ENCODE measurements at regions of chr5 and their contacts with region 1.

Region 1: DNA sequence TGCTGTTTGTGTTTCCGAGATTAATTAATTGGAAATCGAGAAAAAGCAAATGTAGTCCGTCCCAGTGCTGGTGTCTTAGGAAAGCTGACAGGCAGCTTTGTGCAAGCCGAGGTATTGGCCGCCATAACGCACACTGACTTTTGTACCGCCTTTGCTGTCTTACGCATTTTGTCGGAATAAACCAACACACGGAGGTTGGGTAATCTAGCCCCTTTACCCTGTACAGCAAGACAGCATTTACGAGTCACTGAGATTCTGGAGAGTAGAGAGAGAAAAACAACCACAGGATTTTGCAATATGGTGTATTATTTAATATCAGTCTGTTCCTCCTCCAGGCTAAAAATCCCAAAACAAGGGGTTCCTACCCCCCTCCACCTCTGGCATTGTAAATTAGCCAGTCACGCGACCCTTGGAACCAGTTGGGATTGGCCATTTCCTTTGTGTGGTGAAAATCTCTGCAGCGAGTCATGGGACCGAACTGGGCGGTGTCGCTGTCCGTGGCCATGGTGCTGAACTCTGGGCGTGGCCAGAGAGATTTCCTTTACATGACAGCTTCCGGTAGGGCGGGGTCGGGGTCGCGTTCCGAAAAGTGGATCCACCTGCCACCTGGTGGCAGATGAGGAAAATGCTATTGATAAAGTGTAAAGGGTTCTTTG is 10.3 kb upstream of the PCDHB1 start:
- DNase-seq: peak; percentile 99
- ATAC-seq: peak; percentile 88
- H3K4me3 Mint-ChIP-seq: no peak overlapping the region
- H3K27ac Mint-ChIP-seq: no peak overlapping the region
- H3K4me1 Mint-ChIP-seq: peaks cover 4% of the 10 kb centered on the region
- H3K27me3 Mint-ChIP-seq: peaks cover 8% of the 10 kb centered on the region
- CTCF ChIP-seq: peak; percentile 81

Region 2: DNA sequence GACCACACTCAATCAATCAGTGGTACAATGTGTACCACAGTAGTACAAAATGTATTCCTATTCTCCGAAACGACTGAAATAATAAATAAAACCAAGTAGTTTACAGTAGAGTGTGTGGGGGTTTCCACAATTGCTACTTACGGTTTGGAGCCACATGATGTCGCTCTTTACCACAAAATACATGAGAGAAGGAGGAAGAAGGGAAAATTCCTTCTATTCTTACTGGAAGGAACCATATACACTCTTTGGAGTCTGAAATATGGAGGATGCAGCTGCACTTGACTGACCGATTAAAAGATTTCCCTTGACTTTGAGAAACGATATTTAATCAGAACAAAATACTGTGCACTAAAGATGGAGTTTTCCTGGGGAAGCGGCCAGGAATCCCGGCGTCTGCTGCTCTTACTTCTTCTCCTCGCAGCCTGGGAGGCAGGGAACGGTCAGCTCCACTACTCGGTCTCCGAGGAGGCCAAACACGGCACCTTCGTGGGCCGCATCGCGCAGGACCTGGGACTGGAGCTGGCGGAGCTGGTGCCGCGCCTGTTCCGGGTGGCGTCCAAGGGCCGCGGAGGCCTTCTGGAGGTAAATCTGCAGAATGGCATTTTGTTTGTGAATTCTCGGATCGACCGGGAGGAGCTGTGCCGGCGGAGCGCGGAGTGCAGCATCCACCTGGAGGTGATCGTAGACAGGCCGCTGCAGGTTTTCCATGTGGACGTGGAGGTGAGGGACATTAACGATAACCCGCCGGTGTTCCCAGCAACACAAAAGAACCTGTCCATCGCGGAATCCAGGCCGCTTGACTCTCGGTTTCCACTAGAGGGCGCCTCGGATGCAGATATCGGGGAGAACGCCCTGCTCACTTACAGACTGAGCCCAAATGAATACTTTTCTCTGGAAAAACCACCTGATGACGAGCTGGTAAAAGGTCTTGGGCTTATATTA is 233.8 kb before region 1 on chr5 and contains the start of gene PCDHA4:
- CTCF ChIA-PET with region 1: interaction called, 14 read pairs
- POLR2A ChIA-PET with region 1: no interaction called
- DNase-seq: peak; percentile 90
- ATAC-seq: peak; percentile 89
- H3K4me3 Mint-ChIP-seq: peak within 1 kb of the TSS; percentile 92
- H3K27ac Mint-ChIP-seq: peak within 1 kb of the TSS; percentile 36; the same call in 1 of the 2 replicates
- H3K4me1 Mint-ChIP-seq: peaks cover 7% of the 10 kb centered on the region
- H3K27me3 Mint-ChIP-seq: no peaks in the 10 kb centered on the region
- CTCF ChIP-seq: peak; percentile 80
- total RNA-seq, gene PCDHA4: 5.4 to 6.3 TPM (median 5.6 TPM) in 3 replicates

Region 3: DNA sequence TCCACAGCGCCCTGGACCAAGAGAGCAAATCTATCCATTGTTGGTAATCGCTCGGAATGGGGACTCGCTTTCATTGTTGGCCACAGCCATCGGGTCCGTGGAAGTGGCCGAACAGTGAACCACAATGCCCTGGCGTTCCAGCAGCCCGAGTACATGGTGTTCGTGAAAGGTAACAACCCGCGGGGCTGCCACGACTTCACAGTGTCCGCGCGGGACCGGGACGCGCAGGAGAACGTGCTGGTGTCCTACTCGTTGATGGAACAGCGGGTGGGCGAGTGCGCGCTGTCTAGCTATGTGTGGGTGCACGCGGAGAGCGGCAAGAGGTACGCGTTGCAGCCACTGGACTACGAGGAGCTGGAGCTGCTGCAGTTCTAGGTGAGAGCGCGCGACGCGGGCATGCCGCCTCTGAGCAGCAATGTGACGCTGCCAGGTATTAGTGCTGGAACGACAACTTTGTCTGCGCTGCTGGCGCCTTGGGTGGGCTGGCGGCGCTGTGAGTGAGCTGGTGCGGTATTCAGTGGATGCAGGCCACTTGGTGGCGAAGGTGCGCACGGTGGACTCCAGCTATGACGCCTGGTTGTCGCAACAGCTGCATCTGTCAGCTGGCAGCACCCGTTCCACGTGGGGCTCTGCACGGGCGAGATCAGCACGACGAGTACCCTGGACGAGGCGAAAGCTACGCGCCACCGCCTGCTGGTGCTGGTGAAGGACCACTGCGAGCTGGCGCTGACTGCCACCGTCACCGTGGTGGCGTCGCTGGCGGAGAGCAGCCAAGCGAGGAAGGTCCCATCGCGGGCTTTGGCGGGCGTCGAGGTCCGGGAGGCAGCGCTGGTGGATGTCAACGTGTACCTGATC is 178.2 kb before region 1 on chr5:
- CTCF ChIA-PET with region 1: interaction called, 12 read pairs
- POLR2A ChIA-PET with region 1: no interaction called
- DNase-seq: no peak
- ATAC-seq: no peak
- H3K4me3 Mint-ChIP-seq: no peak overlapping the region
- H3K27ac Mint-ChIP-seq: no peak overlapping the region
- H3K4me1 Mint-ChIP-seq: peaks cover 8% of the 10 kb centered on the region
- H3K27me3 Mint-ChIP-seq: no peaks in the 10 kb centered on the region
- CTCF ChIP-seq: no peak

Region 4: GRCh38 chr5:140882591-140882899 is 158.4 kb before region 1 on chr5:
- CTCF ChIA-PET with region 1: interaction called, 77 read pairs
- POLR2A ChIA-PET with region 1: interaction called, 5 read pairs
- DNase-seq: peak; percentile 69
- ATAC-seq: peak; percentile 70
- H3K4me3 Mint-ChIP-seq: peak overlapping the region; percentile 83
- H3K27ac Mint-ChIP-seq: peak overlapping the region; percentile 58; the same call in 1 of the 2 replicates
- H3K4me1 Mint-ChIP-seq: peaks cover 16% of the 10 kb centered on the region; the same call in 1 of the 2 replicates
- H3K27me3 Mint-ChIP-seq: no peaks in the 10 kb centered on the region
- CTCF ChIP-seq: peak; percentile 21; the same call in 1 of the 2 replicates

Region 5: GRCh38 chr5:140977003-140977402 is 63.9 kb before region 1 on chr5:
- CTCF ChIA-PET with region 1: interaction called, 10 read pairs
- POLR2A ChIA-PET with region 1: interaction called, 4 read pairs
- DNase-seq: no peak
- ATAC-seq: no peak
- H3K4me3 Mint-ChIP-seq: no peak overlapping the region
- H3K27ac Mint-ChIP-seq: peak overlapping the region; percentile 15; the same call in 1 of the 2 replicates
- H3K4me1 Mint-ChIP-seq: peaks cover 33% of the 10 kb centered on the region
- H3K27me3 Mint-ChIP-seq: no peaks in the 10 kb centered on the region
- CTCF ChIP-seq: no peak

Measured in WTC11 (cell line).